CD4-positive, alpha-beta memory T cell (primary cell): ENCODE measurements at regions of chr5 and their contacts with region 1.

Region 1: DNA sequence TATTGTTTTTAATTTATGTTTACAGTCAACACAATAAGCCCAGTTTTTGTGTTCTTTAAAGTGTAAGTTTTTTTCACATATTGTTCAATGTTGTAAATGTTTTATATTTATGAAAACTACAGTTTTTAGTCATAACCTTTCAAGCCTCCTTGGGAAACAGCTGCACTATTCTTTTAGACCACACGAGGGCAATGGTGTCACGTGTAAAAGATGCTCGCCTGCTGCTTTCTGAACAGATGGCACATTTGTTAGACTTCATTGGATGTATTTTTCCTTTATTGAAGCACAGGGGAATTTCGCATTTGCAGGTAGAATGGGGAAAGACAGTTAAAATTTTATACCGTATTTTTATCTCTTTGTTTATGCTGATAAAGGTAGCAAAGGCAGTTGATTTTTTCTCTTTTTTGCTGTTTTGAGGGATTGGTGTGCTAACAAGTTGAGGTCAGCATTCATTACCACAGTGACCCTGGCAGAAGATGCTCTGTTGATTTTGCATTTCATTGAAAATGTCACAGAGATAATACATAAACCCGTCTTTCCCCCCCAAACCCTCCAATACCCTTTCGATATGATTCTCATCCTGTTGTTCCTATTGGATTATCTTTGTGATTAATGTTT is 59.0 kb downstream of the MAT2B start:
- DNase-seq: peak; percentile 46 to 62 (median 55)
- H3K4me3 ChIP-seq: no peak overlapping the region
- H3K4me3 Mint-ChIP-seq: peak overlapping the region in 4 of 8 donors; percentile 7 to 61 (median 44)
- H3K27ac ChIP-seq: no peak overlapping the region
- H3K27ac Mint-ChIP-seq: no peak overlapping the region
- H3K4me1 ChIP-seq: peaks cover 17% of the 10 kb centered on the region
- H3K4me1 Mint-ChIP-seq: peaks cover 6 to 34% (median 22%) of the 10 kb centered on the region in 4 donors
- H3K27me3 ChIP-seq: peaks cover 28% of the 10 kb centered on the region
- H3K27me3 Mint-ChIP-seq: peaks cover 38 to 60% of the 10 kb centered on the region in 2 donors

Region 2: GRCh38 chr5:163089230-163089629 is 475.2 kb before region 1 on chr5:
- CTCF ChIA-PET with region 1: no interaction called
- POLR2A ChIA-PET with region 1: no interaction called
- intact Hi-C with region 1: no loop called
- DNase-seq: no peak
- H3K4me3 ChIP-seq: no peak overlapping the region
- H3K4me3 Mint-ChIP-seq: no peak overlapping the region
- H3K27ac ChIP-seq: no peak overlapping the region
- H3K27ac Mint-ChIP-seq: no peak overlapping the region
- H3K4me1 ChIP-seq: no peaks in the 10 kb centered on the region
- H3K4me1 Mint-ChIP-seq: no peaks in the 10 kb centered on the region
- H3K27me3 ChIP-seq: no peaks in the 10 kb centered on the region
- H3K27me3 Mint-ChIP-seq: no peaks in the 10 kb centered on the region

Region 3: DNA sequence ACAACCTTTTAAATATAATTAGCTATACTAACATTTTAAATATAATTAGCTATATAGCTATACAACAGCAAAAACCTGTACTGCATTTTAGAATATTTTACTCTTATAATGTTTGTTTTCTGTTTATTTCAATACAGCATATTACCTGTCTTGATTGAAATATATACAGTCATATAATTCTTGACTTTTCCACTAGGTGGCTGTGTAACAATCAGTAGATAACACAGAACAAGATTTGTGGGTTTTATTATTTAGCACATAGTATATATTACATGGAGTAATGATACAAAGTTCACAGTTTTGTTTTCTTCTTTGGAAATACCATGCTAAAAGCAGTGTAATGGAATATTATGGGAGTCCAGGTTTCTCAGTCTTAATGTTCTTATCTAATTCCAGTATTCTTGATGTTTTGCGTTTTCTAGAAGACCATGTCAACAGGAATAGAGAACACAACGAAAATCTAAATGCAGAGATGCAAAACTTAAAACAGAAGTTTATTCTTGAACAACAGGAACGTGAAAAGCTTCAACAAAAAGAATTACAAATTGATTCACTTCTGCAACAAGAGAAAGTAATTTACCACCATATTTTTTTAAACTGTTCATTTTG is 90.7 kb before region 1 on chr5:
- CTCF ChIA-PET with region 1: interaction called, 3 read pairs
- POLR2A ChIA-PET with region 1: no interaction called
- intact Hi-C with region 1: loop called (anchors 1 kb)
- DNase-seq: peak in 3 of 5 donors; percentile 23 to 39 (median 35)
- H3K4me3 ChIP-seq: no peak overlapping the region
- H3K4me3 Mint-ChIP-seq: no peak overlapping the region
- H3K27ac ChIP-seq: no peak overlapping the region
- H3K27ac Mint-ChIP-seq: peak overlapping the region in 1 of 7 donors; percentile 47
- H3K4me1 ChIP-seq: no peaks in the 10 kb centered on the region
- H3K4me1 Mint-ChIP-seq: peaks cover 0 to 7% (median 6%) of the 10 kb centered on the region in 4 donors
- H3K27me3 ChIP-seq: no peaks in the 10 kb centered on the region
- H3K27me3 Mint-ChIP-seq: no peaks in the 10 kb centered on the region

Region 4: DNA sequence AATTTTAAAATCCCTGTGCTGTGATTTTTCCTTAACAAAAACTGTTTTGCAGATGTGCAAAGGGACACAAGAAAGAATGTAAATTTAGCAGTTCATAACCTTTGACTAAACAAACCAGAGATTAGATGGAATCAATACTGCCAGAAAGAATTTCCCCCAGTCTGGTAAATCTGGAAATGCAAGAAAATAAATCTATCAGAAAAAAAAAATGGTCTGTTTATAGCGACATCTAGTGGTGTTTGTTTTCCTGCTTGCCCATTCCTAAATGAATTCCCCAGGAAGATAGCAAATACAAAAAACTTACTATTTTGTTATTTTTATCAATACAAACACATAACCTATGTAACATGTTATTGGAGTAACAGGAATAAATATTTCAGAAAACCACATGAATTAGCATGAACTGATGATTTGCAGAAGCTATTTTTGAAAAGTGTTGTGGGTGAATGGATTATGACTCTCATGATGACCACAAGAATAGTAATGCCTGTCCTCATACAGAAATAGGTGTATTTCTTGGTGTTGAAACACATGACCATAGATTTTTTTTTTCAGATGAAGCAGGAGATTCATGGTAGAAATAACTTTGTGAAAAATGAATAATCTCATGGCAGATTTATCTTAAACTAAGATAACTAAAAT is 1644.8 kb after region 1 on chr5:
- CTCF ChIA-PET with region 1: no interaction called
- POLR2A ChIA-PET with region 1: no interaction called
- intact Hi-C with region 1: loop called (anchors 2 kb)
- DNase-seq: no peak
- H3K4me3 ChIP-seq: no peak overlapping the region
- H3K4me3 Mint-ChIP-seq: no peak overlapping the region
- H3K27ac ChIP-seq: no peak overlapping the region
- H3K27ac Mint-ChIP-seq: no peak overlapping the region
- H3K4me1 ChIP-seq: no peaks in the 10 kb centered on the region
- H3K4me1 Mint-ChIP-seq: no peaks in the 10 kb centered on the region
- H3K27me3 ChIP-seq: no peaks in the 10 kb centered on the region
- H3K27me3 Mint-ChIP-seq: no peaks in the 10 kb centered on the region